ENCODE measurements at regions of chr20 and their contacts with region 1.

Region 1: DNA sequence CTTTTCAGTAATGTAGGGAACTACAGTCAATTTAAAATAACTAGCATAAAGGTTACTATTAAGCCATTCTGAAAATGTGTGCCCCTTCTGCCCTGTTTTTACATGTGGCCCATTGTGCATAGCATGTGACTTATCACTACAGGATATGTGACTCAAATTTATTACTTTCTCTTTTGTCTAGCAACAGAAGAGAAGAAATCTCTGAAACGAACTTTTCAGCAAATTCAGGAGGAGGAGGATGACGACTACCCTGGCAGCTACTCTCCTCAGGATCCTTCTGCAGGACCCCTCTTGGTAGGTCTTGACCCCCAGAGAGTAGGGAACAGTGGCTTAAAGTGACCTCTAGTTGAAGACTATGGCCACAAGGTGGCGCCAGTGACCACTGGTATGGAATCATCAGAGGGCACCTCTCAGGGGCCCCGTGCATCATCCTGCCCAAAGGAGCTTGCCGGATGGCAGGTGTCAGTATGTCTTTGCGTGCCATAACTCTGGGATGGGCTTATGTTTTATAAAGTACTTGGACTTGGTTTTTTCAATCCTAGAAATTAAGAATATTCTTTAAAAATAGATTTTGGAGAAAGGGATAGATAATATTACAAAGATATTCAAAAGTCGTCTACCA is 23.9 kb downstream of the RPRD1B start:
- DNase-seq: peak; percentile 58
- ATAC-seq: peak; percentile 99
- H3K4me3 ChIP-seq: no peak overlapping the region
- H3K27ac ChIP-seq: no peak overlapping the region
- H3K4me1 ChIP-seq: no peaks in the 10 kb centered on the region
- H3K27me3 ChIP-seq: no peaks in the 10 kb centered on the region
- CTCF ChIP-seq: peak; percentile 82 to 93 (median 89)
- POLR2A ChIP-seq: no peak
- RAD21 ChIP-seq: peak; percentile 83

Region 2: GRCh38 chr20:38036366-38036765 is 21.1 kb before region 1 on chr20:
- CTCF ChIA-PET with region 1: interaction called, 11 read pairs
- POLR2A ChIA-PET with region 1: no interaction called
- RAD21 ChIA-PET with region 1: no interaction called
- intact Hi-C with region 1: no loop called
- DNase-seq: no peak
- ATAC-seq: no peak
- H3K4me3 ChIP-seq: no peak overlapping the region
- H3K27ac ChIP-seq: no peak overlapping the region
- H3K4me1 ChIP-seq: peaks cover 12 to 22% of the 10 kb centered on the region in 2 experiments; a peak in 3 of 4 replicates
- H3K27me3 ChIP-seq: no peaks in the 10 kb centered on the region
- CTCF ChIP-seq: no peak
- POLR2A ChIP-seq: no peak
- RAD21 ChIP-seq: no peak

Region 3: GRCh38 chr20:38113401-38114325 is 56.2 kb after region 1 on chr20:
- CTCF ChIA-PET with region 1: no interaction called
- POLR2A ChIA-PET with region 1: no interaction called
- RAD21 ChIA-PET with region 1: no interaction called
- intact Hi-C with region 1: no loop called
- DNase-seq: peak; percentile 27
- ATAC-seq: peak; percentile 85
- H3K4me3 ChIP-seq: no peak overlapping the region
- H3K27ac ChIP-seq: no peak overlapping the region
- H3K4me1 ChIP-seq: peaks cover 7 to 44% of the 10 kb centered on the region in 2 experiments; a peak in 3 of 4 replicates
- H3K27me3 ChIP-seq: no peaks in the 10 kb centered on the region
- CTCF ChIP-seq: peak; percentile 48 to 67 (median 55)
- POLR2A ChIP-seq: no peak
- RAD21 ChIP-seq: peak; percentile 69

Region 4: GRCh38 chr20:38165089-38165989 is 107.9 kb after region 1 on chr20 and contains the start of gene TGM2:
- CTCF ChIA-PET with region 1: interaction called, 5 read pairs
- POLR2A ChIA-PET with region 1: no interaction called
- RAD21 ChIA-PET with region 1: no interaction called
- intact Hi-C with region 1: loop called (anchors 1 kb)
- DNase-seq: no peak
- ATAC-seq: peak; percentile 96
- H3K4me3 ChIP-seq: peak within 1 kb of the TSS; percentile 41 to 58
- H3K27ac ChIP-seq: no peak within 1 kb of the TSS; the same call in 1 of the 2 replicates
- H3K4me1 ChIP-seq: peaks cover 14 to 33% of the 10 kb centered on the region in 2 experiments; a peak in 3 of 4 replicates
- H3K27me3 ChIP-seq: no peaks in the 10 kb centered on the region
- CTCF ChIP-seq: peak; percentile 78 to 91 (median 81)
- POLR2A ChIP-seq: no peak
- RAD21 ChIP-seq: peak; percentile 86
- total RNA-seq, gene TGM2: 6.1 TPM

Region 5: DNA sequence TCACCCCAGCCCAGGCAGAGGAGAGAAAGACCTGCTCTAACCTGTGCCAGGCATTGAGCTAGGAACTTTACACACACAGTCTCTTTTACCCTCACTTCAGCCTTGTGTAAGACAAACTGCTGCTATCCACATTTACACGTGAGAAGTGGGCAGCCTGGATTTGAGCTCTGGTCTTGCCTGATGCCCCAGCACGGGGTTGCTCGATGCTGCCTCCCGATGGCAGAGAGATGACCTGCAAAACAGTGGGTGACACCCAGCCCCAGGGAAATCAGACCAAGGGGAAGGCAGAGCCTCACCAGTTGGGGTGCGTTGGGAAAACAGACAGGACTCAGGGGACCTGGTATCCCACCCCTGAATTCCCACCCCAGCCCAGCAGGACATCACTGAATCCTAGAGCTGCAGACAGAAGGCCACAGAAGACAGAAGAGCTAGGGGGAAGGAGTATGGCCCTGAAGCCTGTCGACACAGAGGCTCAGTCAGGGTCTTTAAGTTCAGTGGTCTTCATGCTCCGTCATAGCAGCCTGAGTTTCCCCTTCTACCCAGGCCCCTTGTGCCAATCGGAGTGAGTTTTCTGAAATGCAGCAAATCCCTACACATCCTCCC is 247.5 kb after region 1 on chr20:
- CTCF ChIA-PET with region 1: interaction called, 4 read pairs
- POLR2A ChIA-PET with region 1: no interaction called
- RAD21 ChIA-PET with region 1: no interaction called
- intact Hi-C with region 1: loop called (anchors 5 kb)
- DNase-seq: peak; percentile 4
- ATAC-seq: peak; percentile 94
- H3K4me3 ChIP-seq: no peak overlapping the region
- H3K27ac ChIP-seq: no peak overlapping the region
- H3K4me1 ChIP-seq: peaks cover 5 to 6% of the 10 kb centered on the region in 2 experiments; a peak in 2 of 4 replicates
- H3K27me3 ChIP-seq: no peaks in the 10 kb centered on the region
- CTCF ChIP-seq: peak; percentile 37 to 82 (median 75); a peak in 5 of 6 replicates
- POLR2A ChIP-seq: no peak
- RAD21 ChIP-seq: peak; percentile 59

Region 6: GRCh38 chr20:38406476-38406875 is 349.0 kb after region 1 on chr20:
- CTCF ChIA-PET with region 1: interaction called, 13 read pairs
- POLR2A ChIA-PET with region 1: no interaction called
- RAD21 ChIA-PET with region 1: interaction called in 1 of 2 experiments, 4 read pairs
- intact Hi-C with region 1: loop called (anchors 5 kb)
- DNase-seq: no peak
- ATAC-seq: no peak
- H3K4me3 ChIP-seq: no peak overlapping the region
- H3K27ac ChIP-seq: no peak overlapping the region
- H3K4me1 ChIP-seq: no peaks in the 10 kb centered on the region; a peak in 1 of 4 replicates
- H3K27me3 ChIP-seq: no peaks in the 10 kb centered on the region
- CTCF ChIP-seq: no peak
- POLR2A ChIP-seq: no peak
- RAD21 ChIP-seq: no peak

Measured in HCT116 (cell line).